ENCODE measurements at regions of chr20 and their contacts with region 1.

Region 1: DNA sequence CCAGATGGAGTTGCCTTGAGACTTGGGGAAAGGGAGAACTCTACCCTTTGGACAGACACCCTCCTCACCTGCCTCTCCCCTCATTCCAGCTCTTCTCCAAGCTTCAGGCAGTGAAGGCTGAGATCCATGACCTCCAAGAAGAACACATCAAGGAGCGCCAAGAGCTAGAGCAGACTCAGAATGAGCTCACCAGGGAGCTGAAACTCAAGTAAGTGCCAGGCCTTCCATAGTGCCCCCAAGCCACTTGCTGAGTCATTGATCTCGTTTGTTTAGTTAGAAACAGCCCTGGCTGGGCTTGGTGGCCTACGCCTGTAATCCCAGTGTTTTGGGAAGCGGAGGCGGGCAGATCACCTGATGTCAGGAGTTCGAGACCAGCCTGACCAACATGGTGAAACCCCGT is 39.2 kb downstream of the KIF3B start:
- DNase-seq: no peak
- H3K4me3 ChIP-seq: no peak overlapping the region
- H3K27ac ChIP-seq: no peak overlapping the region
- H3K4me1 ChIP-seq: no peaks in the 10 kb centered on the region
- H3K27me3 ChIP-seq: no peaks in the 10 kb centered on the region
- CTCF ChIP-seq: no peak

Region 2: GRCh38 chr20:32289661-32290431 is 26.8 kb before region 1 on chr20:
- CTCF ChIA-PET with region 1: no interaction called
- POLR2A ChIA-PET with region 1: no interaction called
- intact Hi-C with region 1: no loop called
- DNase-seq: no peak
- H3K4me3 ChIP-seq: no peak overlapping the region
- H3K27ac ChIP-seq: no peak overlapping the region
- H3K4me1 ChIP-seq: peaks cover 8% of the 10 kb centered on the region
- H3K27me3 ChIP-seq: no peaks in the 10 kb centered on the region
- CTCF ChIP-seq: no peak

Region 3: DNA sequence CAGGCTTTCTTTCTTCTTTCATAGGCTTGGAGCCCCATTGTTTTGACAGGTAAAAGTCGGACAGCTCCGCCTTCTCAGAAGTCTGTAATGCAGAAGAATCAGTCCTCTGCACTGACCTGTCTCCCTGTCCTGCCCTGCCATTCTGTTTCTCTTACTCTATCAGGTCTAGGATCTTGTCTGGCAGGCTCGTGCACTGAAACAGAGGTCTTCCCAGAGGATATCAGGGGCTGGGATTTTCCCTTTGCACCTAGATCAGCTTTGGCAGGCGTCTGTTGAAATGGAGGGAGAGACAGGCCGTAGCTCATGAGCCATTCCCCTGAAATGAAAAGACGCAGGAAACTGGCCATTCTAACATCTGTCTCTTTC is 14.2 kb before region 1 on chr20:
- CTCF ChIA-PET with region 1: interaction called, 13 read pairs
- POLR2A ChIA-PET with region 1: no interaction called
- intact Hi-C with region 1: no loop called
- DNase-seq: no peak
- H3K4me3 ChIP-seq: no peak overlapping the region
- H3K27ac ChIP-seq: peak overlapping the region; percentile 22
- H3K4me1 ChIP-seq: peaks cover 18% of the 10 kb centered on the region
- H3K27me3 ChIP-seq: no peaks in the 10 kb centered on the region
- CTCF ChIP-seq: no peak